Thyroid gland (tissue), 4 donors: ENCODE measurements at regions of chr17 and their contacts with region 1.

Region 1: GRCh38 chr17:35286120-35286781 is 43.4 kb downstream of the SLFN5 start:
- DNase-seq: no peak
- H3K4me3 ChIP-seq: no peak overlapping the region
- H3K27ac ChIP-seq: no peak overlapping the region
- H3K4me1 ChIP-seq: no peaks in the 10 kb centered on the region
- H3K27me3 ChIP-seq: no peaks in the 10 kb centered on the region
- CTCF ChIP-seq: no peak
- POLR2A ChIP-seq: no peak

Region 2: DNA sequence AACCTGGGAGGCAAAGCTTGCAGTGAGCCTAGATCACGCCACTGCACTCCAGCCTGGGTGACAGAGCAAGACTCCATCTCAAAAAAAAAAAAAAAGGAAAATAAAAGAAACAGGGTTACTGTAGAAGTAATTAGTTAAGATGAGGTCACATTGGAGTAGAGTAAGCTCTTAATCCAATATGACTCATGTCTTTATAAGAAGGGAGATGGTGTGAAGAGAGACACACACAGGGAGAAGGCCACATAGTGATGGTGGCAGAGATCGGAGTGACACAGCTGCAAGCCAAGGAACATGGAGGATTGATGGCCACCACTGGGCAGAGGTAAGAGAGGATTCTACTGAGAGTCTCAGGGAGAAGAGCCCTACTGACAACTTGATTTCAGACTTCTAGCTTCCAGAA is 58.7 kb before region 1 on chr17:
- intact Hi-C with region 1: loop called (anchors 10 kb)
- DNase-seq: no peak
- H3K4me3 ChIP-seq: no peak overlapping the region
- H3K27ac ChIP-seq: no peak overlapping the region
- H3K4me1 ChIP-seq: no peaks in the 10 kb centered on the region
- H3K27me3 ChIP-seq: no peaks in the 10 kb centered on the region
- CTCF ChIP-seq: no peak
- POLR2A ChIP-seq: no peak

Region 3: GRCh38 chr17:35238821-35239220 is 47.4 kb before region 1 on chr17:
- intact Hi-C with region 1: no loop called
- DNase-seq: no peak
- H3K4me3 ChIP-seq: no peak overlapping the region
- H3K27ac ChIP-seq: no peak overlapping the region
- H3K4me1 ChIP-seq: peaks cover 9 to 11% of the 10 kb centered on the region in 2 donors
- H3K27me3 ChIP-seq: no peaks in the 10 kb centered on the region
- CTCF ChIP-seq: no peak
- POLR2A ChIP-seq: no peak